ENCODE measurements at regions of chr17 and their contacts with region 1.

Region 1: DNA sequence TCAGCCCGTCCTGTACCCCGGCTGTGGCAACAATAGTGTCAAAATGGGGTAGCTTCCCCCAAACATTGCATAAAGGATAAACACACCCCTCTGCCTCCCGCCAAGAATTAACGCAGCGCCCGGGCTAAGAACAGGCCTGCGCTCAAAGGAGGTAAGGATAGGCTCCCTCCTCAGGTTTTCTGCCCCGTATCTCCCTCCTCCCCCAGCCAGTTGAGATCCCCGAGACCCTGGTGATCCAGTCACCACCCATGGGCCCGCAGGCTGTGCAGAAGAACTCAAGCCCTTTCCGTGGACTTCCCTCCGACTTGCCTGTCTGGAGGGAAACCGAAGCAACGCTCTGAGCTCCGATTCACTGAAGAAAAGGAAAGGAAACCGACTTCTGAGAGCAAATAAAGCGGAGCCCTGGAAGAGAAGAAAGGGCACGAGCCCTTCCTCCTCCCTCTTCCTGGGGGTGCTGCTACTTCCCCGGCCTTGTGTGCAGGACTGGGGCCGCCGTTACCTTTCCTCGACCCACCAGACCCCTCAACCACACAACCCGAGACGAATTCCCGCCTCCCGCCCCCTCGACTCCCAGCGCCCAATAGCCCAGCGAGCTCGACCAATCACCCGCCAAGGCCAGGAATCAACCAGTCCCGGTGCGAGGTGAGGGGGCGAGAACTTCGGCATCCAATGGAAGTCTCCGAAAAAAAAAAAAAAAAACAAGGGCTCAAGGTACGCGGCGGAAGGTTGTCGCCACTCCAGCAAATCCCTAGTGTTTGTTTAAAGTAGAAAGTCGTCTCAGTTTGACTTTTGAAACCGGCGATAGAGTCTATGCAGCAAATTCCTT is at the start of gene BRIP1:
- DNase-seq: peak; percentile 61 to 90 (median 85)
- ATAC-seq: peak; percentile 99
- H3K4me3 ChIP-seq: peak within 1 kb of the TSS; percentile 88
- H3K4me3 Mint-ChIP-seq: peak within 1 kb of the TSS; percentile 88 to 98 (median 96)
- H3K27ac ChIP-seq: peak within 1 kb of the TSS; percentile 70
- H3K27ac Mint-ChIP-seq: peak within 1 kb of the TSS; percentile 86 to 97 (median 93)
- H3K4me1 ChIP-seq: peaks cover 5 to 11% of the 10 kb centered on the region in 2 donors
- H3K4me1 Mint-ChIP-seq: peaks cover 8 to 36% (median 26%) of the 10 kb centered on the region in 7 donors
- H3K27me3 ChIP-seq: no peaks in the 10 kb centered on the region
- H3K27me3 Mint-ChIP-seq: no peaks in the 10 kb centered on the region
- total RNA-seq, gene BRIP1: 1.6 to 19.9 (median 1.8) TPM

Region 2: DNA sequence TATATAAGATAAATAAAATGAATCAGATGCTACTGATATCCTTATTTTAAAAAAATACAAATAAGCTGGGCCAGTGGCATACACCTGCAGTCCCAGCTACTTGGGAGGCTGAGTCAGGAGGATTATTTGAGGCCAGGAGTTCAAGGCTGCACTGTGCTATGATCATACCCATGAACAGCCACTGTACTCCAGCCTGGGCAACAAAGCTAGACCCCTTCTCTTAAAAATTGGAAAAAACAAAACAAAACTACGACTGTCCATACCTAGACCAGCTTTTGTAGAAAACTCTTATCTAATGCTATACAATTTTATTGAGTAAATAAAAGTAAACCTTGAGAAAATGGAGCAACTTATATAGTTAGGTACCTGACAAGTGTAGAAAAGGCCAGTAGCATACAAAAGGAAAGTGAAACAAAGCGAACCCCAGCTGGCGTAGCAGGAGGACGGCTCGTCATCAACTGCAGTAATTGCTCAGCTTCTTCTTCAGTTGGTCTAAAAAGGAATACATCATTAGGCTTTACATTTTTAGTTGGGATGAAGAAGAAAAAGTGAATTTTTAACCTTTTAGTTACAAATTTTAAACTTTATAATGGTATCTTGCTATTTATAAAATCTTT is 41.0 kb after region 1 on chr17:
- CTCF ChIA-PET with region 1: no interaction called
- POLR2A ChIA-PET with region 1: interaction called, 5 read pairs
- intact Hi-C with region 1: loop called in 1 of 2 experiments (anchors 2 kb)
- DNase-seq: peak in 7 of 9 donors; percentile 10 to 39 (median 29)
- ATAC-seq: peak; percentile 72
- H3K4me3 ChIP-seq: peak overlapping the region; percentile 8
- H3K4me3 Mint-ChIP-seq: peak overlapping the region in 9 of 10 donors; percentile 17 to 65 (median 52)
- H3K27ac ChIP-seq: peak overlapping the region; percentile 48
- H3K27ac Mint-ChIP-seq: peak overlapping the region; percentile 46 to 90 (median 78)
- H3K4me1 ChIP-seq: peaks cover 0 to 11% of the 10 kb centered on the region in 2 donors
- H3K4me1 Mint-ChIP-seq: peaks cover 0 to 8% (median 4%) of the 10 kb centered on the region in 7 donors
- H3K27me3 ChIP-seq: no peaks in the 10 kb centered on the region
- H3K27me3 Mint-ChIP-seq: no peaks in the 10 kb centered on the region

Region 3: DNA sequence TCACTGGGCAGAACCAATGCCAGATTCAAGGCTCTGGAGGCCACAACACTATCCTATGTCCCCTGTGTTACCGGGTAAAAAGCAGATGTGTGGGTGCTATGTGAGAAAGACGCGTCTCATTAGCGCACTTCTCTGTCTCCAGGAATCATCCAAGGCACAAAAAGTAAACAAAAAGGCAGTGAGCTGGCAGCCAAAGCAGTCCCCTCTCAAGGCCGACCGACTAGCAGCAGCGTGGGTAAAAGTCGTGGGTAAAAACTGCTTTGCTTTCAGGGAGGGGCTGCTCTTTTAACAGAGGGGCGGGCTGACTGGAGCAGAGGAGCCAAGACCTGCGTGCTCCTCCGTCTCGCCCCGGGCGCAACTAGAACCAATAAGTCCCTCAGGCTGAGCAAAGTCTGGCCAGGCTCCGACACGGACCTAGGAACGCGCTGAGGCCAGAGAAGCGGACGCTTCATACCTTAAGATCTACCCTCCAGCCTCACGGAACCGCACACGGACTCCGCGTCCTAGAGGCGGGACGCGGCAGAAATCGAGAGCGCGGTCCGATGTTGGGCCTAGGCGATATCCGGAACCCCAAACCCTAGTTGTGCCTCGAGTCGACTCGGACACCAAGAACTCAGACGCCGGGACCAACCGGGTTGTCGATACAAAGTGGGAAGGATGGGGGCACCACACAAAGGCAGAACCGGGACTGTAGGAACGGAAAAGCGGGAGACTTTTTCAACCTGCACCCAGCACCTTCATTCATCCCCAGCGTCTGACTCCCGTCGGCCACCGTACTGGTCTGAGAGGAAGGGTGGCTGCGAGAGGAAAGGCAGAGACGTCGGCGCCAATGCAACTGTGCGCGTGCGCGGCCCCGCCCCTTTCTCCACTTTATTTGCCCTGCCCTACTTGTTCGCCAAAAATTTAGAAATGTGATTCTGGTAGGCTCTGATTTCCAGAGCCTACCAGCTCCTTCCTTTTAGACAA is 64.3 kb after region 1 on chr17 and contains the start of gene INTS2:
- CTCF ChIA-PET with region 1: no interaction called
- POLR2A ChIA-PET with region 1: interaction called, 3 read pairs
- intact Hi-C with region 1: loop called (anchors 1 kb)
- DNase-seq: peak; percentile 90 to 96 (median 94)
- ATAC-seq: peak; percentile 95
- H3K4me3 ChIP-seq: peak within 1 kb of the TSS; percentile 98
- H3K4me3 Mint-ChIP-seq: peak within 1 kb of the TSS; percentile 88 to 96 (median 92)
- H3K27ac ChIP-seq: peak within 1 kb of the TSS; percentile 80
- H3K27ac Mint-ChIP-seq: peak within 1 kb of the TSS; percentile 90 to 98 (median 94)
- H3K4me1 ChIP-seq: peaks cover 11 to 19% of the 10 kb centered on the region in 2 donors
- H3K4me1 Mint-ChIP-seq: peaks cover 13 to 28% (median 21%) of the 10 kb centered on the region in 7 donors
- H3K27me3 ChIP-seq: no peaks in the 10 kb centered on the region
- H3K27me3 Mint-ChIP-seq: peaks cover 0 to 3% (median 0%) of the 10 kb centered on the region in 5 donors
- total RNA-seq, gene INTS2: 14.9 to 24.4 (median 19.2) TPM

Region 4: GRCh38 chr17:61970019-61970418 is 106.8 kb after region 1 on chr17:
- CTCF ChIA-PET with region 1: no interaction called
- POLR2A ChIA-PET with region 1: no interaction called
- intact Hi-C with region 1: no loop called
- DNase-seq: no peak
- ATAC-seq: no peak
- H3K4me3 ChIP-seq: no peak overlapping the region
- H3K4me3 Mint-ChIP-seq: no peak overlapping the region
- H3K27ac ChIP-seq: no peak overlapping the region
- H3K27ac Mint-ChIP-seq: peak overlapping the region in 1 of 9 donors; percentile 30
- H3K4me1 ChIP-seq: no peaks in the 10 kb centered on the region
- H3K4me1 Mint-ChIP-seq: peaks cover 4 to 11% (median 6%) of the 10 kb centered on the region in 7 donors
- H3K27me3 ChIP-seq: no peaks in the 10 kb centered on the region
- H3K27me3 Mint-ChIP-seq: no peaks in the 10 kb centered on the region

Region 5: DNA sequence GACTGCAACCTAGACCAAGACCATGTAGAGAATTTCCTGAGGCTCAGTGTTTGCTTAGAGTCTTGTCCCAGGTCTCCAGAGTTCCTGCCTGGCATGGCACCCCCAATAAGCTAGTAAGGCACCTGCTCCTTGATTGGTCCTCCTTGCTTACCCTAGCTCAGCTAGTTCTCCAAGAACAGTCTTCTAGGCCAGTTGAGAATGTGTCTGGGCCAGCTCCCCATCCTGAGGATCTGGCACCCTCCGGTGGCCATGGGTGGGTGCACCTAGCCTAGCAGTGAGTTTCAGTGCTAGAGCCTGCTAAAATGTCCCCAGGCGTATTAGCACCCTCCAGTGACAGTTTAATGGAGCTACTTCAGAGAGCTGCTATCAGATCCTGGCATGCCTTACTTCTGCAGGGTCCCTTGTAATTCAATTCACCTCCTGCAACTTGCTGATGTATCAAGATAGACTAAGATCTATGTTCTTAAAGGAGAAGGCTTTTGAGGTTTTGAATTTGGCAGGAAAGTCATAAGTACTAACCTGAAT is 246.3 kb after region 1 on chr17:
- CTCF ChIA-PET with region 1: no interaction called
- POLR2A ChIA-PET with region 1: no interaction called
- intact Hi-C with region 1: loop called in 1 of 2 experiments (anchors 1 kb)
- DNase-seq: peak in 7 of 9 donors; percentile 13 to 51 (median 24)
- ATAC-seq: peak; percentile 90
- H3K4me3 ChIP-seq: no peak overlapping the region
- H3K4me3 Mint-ChIP-seq: no peak overlapping the region
- H3K27ac ChIP-seq: no peak overlapping the region
- H3K27ac Mint-ChIP-seq: no peak overlapping the region
- H3K4me1 ChIP-seq: no peaks in the 10 kb centered on the region
- H3K4me1 Mint-ChIP-seq: peaks cover 0 to 2% (median 0%) of the 10 kb centered on the region in 7 donors
- H3K27me3 ChIP-seq: no peaks in the 10 kb centered on the region
- H3K27me3 Mint-ChIP-seq: peaks cover 0 to 11% (median 0%) of the 10 kb centered on the region in 5 donors